ENCODE measurements at regions of chr4 and their contacts with region 1.

Region 1: DNA sequence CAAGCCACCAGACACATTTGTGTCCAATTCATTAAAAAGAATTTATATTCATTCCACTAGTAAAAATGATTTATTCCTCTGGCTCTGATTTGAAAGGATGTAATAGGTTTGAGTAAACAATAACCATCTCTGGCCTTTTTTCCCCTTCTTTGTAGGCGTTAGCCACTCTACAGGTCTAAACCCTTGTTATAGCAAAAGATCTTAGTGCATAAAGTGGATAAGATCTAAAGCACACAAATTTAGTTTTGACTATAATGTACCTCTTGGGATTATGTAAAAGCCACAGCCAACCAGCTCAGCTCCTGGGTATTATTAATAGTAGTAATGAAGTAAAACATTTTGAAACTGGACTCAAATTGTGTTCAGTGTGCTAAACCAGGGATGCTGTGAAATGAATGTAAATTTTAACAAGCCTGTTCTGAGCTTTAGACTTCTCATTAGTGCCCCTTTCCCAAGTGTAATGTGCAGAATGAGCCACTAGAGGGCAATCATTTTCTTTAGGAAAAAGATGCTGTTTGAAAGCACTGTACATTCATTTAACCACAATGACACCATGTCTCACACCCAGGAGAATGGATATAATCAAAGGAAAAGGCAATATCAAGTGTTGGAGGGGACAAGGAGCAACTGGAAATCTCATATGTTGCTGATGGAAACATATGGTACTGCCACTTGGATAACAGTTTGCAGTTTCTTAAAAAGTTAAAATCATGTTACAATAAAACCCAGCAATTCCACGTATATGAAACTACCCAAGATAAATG is 69.7 kb downstream of the KLHL8 start:
- DNase-seq: peak; percentile 56
- ATAC-seq: peak; percentile 76
- H3K4me3 Mint-ChIP-seq: no peak overlapping the region
- H3K27ac Mint-ChIP-seq: no peak overlapping the region
- H3K4me1 Mint-ChIP-seq: no peaks in the 10 kb centered on the region
- H3K27me3 Mint-ChIP-seq: no peaks in the 10 kb centered on the region

Region 2: DNA sequence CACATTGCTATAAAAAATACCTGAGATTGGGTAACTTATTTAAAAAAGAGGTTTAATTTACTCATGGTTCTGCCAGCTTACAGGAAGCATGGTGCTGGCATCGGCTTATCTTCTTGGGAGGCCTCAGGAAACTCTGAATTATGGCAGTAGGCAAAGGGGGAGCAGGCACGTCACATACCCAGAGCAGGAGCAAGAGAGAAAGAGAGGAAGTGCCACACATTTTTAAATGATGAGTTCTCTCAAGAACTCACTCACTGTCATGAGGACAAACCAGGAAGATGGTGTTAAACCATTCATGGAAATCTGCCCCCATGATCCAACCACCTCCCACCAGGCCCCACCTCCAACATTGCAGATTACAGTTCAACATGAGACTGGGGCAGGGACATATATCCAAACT is 225.9 kb before region 1 on chr4:
- CTCF ChIA-PET with region 1: interaction called, 23 read pairs
- POLR2A ChIA-PET with region 1: no interaction called
- intact Hi-C with region 1: loop called (anchors 1 to 5 kb)
- DNase-seq: no peak
- ATAC-seq: no peak
- H3K4me3 Mint-ChIP-seq: no peak overlapping the region
- H3K27ac Mint-ChIP-seq: no peak overlapping the region
- H3K4me1 Mint-ChIP-seq: peaks cover 24% of the 10 kb centered on the region
- H3K27me3 Mint-ChIP-seq: no peaks in the 10 kb centered on the region

Region 3: DNA sequence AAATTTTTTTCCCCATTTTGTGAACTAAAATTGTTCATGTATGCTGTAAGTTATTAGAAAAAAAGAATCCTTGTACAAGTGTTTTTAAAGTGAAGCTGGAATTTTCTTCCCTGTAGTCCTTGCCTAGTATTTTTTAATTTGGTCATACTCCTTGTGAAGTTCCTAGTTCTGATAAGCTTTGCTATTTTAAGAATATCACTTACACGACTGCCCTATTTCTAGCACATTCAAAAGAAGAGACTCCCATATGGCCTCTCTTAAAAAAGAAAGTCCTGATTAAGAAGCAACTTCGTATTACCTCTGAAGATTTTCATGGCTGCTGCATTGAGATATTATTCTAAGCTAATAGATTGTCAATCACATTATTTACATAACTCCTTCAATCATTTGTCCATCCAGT is 17.5 kb before region 1 on chr4:
- CTCF ChIA-PET with region 1: interaction called, 10 read pairs
- POLR2A ChIA-PET with region 1: no interaction called
- intact Hi-C with region 1: no loop called
- DNase-seq: no peak
- ATAC-seq: no peak
- H3K4me3 Mint-ChIP-seq: no peak overlapping the region
- H3K27ac Mint-ChIP-seq: no peak overlapping the region
- H3K4me1 Mint-ChIP-seq: no peaks in the 10 kb centered on the region
- H3K27me3 Mint-ChIP-seq: no peaks in the 10 kb centered on the region

Region 4: GRCh38 chr4:87220094-87220822 is 69.6 kb after region 1 on chr4 and contains the start of gene KLHL8:
- CTCF ChIA-PET with region 1: interaction called, 11 read pairs
- POLR2A ChIA-PET with region 1: interaction called, 3 read pairs
- intact Hi-C with region 1: loop called in 1 of 2 experiments (anchors 1 kb)
- DNase-seq: peak; percentile 92
- ATAC-seq: peak; percentile 91
- H3K4me3 Mint-ChIP-seq: peak within 1 kb of the TSS; percentile 89
- H3K27ac Mint-ChIP-seq: peak within 1 kb of the TSS; percentile 92
- H3K4me1 Mint-ChIP-seq: peaks cover 17% of the 10 kb centered on the region
- H3K27me3 Mint-ChIP-seq: peaks cover 2% of the 10 kb centered on the region
- total RNA-seq, gene KLHL8: 9.8 to 10.3 TPM

Region 5: GRCh38 chr4:87235020-87235671 is 84.5 kb after region 1 on chr4:
- CTCF ChIA-PET with region 1: interaction called, 33 read pairs
- POLR2A ChIA-PET with region 1: no interaction called
- intact Hi-C with region 1: loop called (anchors 1 kb)
- DNase-seq: no peak
- ATAC-seq: no peak
- H3K4me3 Mint-ChIP-seq: peak overlapping the region; percentile 69
- H3K27ac Mint-ChIP-seq: no peak overlapping the region
- H3K4me1 Mint-ChIP-seq: peaks cover 1% of the 10 kb centered on the region
- H3K27me3 Mint-ChIP-seq: no peaks in the 10 kb centered on the region

Region 6: GRCh38 chr4:87465739-87466366 is 315.2 kb after region 1 on chr4:
- CTCF ChIA-PET with region 1: interaction called, 4 read pairs
- POLR2A ChIA-PET with region 1: no interaction called
- intact Hi-C with region 1: loop called (anchors 1 to 2 kb)
- DNase-seq: no peak
- ATAC-seq: no peak
- H3K4me3 Mint-ChIP-seq: no peak overlapping the region
- H3K27ac Mint-ChIP-seq: no peak overlapping the region
- H3K4me1 Mint-ChIP-seq: no peaks in the 10 kb centered on the region
- H3K27me3 Mint-ChIP-seq: no peaks in the 10 kb centered on the region

Region 7: GRCh38 chr4:88230969-88231771 is 1080.5 kb after region 1 on chr4:
- CTCF ChIA-PET with region 1: no interaction called
- POLR2A ChIA-PET with region 1: no interaction called
- intact Hi-C with region 1: no loop called
- DNase-seq: no peak
- ATAC-seq: no peak
- H3K4me3 Mint-ChIP-seq: no peak overlapping the region
- H3K27ac Mint-ChIP-seq: no peak overlapping the region
- H3K4me1 Mint-ChIP-seq: peaks cover 6% of the 10 kb centered on the region
- H3K27me3 Mint-ChIP-seq: no peaks in the 10 kb centered on the region